Activated CD4-positive, alpha-beta memory T cell treated with anti-CD3 and anti-CD28 coated beads, Interleukin-2, amount 10 ng/mL, durations not matched to agents 7 days and 5 days (primary cell): ENCODE measurements at regions of chr2 and their contacts with region 1.

Region 1: GRCh38 chr2:54570925-54571694 is 115.0 kb downstream of the SPTBN1 start:
- DNase-seq: peak; percentile 82
- H3K4me3 Mint-ChIP-seq: peak overlapping the region; percentile 49
- H3K27ac Mint-ChIP-seq: peak overlapping the region; percentile 95
- H3K4me1 Mint-ChIP-seq: peaks cover 84% of the 10 kb centered on the region
- H3K27me3 Mint-ChIP-seq: no peaks in the 10 kb centered on the region

Region 2: GRCh38 chr2:54535599-54536195 is 35.4 kb before region 1 on chr2:
- CTCF ChIA-PET with region 1: no interaction called
- POLR2A ChIA-PET with region 1: no interaction called
- DNase-seq: no peak
- H3K4me3 Mint-ChIP-seq: no peak overlapping the region
- H3K27ac Mint-ChIP-seq: no peak overlapping the region
- H3K4me1 Mint-ChIP-seq: peaks cover under 1% of the 10 kb centered on the region
- H3K27me3 Mint-ChIP-seq: peaks cover 17% of the 10 kb centered on the region

Region 3: DNA sequence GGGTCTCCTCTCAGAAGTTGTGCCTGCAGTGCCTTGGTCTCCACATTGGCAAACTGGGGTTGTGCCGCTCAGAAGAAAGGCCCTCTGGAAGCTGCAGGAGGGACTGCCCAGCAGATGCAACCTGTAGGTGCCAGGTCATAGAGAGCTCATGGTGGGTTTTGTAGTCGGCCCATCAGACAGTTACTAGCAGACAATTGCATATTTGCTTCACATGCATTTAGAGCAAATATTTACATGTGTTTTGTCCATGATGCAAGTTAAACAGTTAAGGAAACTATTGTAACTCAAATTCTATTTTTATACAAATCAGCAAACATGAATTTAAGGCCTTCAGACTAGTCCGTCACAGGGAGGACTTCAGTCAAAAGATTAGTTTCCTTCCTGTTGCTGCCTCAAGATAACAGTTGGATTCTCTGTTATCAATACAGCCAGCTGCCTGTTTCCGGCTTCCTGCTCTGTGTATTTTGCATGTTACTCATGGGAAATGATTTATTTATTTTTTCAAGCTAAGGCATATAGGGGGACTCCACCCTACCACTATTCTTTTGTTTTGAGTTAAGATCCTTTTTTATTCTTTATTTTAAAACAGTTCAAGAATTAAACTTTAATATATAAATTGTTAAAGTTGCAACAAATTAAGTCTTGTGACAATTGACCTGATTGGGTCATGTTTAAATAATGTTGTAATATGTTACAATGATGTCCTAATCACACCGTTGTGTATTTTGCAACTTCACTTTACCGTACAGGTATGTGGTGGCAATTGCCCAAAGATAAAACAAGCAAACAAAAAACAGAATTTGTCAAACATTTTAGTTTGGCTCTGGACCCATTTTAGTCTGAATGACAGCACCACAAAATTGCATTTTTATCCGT is 18.5 kb after region 1 on chr2:
- CTCF ChIA-PET with region 1: interaction called, 3 read pairs
- POLR2A ChIA-PET with region 1: interaction called, 28 read pairs
- DNase-seq: peak; percentile 51
- H3K4me3 Mint-ChIP-seq: peak overlapping the region; percentile 36
- H3K27ac Mint-ChIP-seq: peak overlapping the region; percentile 91
- H3K4me1 Mint-ChIP-seq: peaks cover 69% of the 10 kb centered on the region
- H3K27me3 Mint-ChIP-seq: no peaks in the 10 kb centered on the region

Region 4: GRCh38 chr2:54597153-54597848 is 26.2 kb after region 1 on chr2:
- CTCF ChIA-PET with region 1: interaction called, 7 read pairs
- POLR2A ChIA-PET with region 1: interaction called, 21 read pairs
- DNase-seq: no peak
- H3K4me3 Mint-ChIP-seq: no peak overlapping the region
- H3K27ac Mint-ChIP-seq: peak overlapping the region; percentile 87
- H3K4me1 Mint-ChIP-seq: peaks cover 74% of the 10 kb centered on the region
- H3K27me3 Mint-ChIP-seq: no peaks in the 10 kb centered on the region

Region 5: DNA sequence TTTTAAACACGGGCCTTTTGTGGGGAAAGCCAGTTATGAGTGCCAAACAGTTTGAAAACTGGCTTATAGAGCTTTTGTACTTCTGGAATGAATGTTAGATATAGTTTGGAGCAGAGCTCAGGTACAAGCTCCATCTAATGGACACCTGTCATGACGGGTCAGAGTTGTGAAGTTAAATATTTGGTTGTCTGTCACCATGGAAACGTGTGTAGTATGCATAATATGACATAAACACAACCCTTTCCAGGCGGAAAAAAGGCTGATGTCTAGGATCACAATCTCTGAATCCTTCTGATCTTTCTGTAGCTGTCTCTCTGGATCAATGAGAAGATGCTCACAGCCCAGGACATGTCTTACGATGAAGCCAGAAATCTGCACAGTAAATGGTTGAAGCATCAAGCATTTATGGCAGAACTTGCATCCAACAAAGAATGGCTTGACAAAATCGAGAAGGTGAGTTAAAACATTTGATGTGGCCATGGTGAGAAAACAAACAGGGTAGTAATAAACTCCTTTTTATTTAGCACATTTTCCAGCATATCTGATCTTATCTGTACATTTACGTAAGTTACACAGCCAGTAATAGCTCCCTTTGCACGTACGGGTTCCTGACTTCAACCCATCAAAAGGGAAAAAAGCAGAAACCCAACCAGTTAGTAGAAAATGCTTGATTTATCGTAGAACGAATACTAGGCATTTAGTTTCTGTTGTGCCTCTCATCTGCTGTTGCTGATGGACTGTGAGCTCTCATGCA is 71.7 kb after region 1 on chr2:
- CTCF ChIA-PET with region 1: no interaction called
- POLR2A ChIA-PET with region 1: no interaction called
- DNase-seq: no peak
- H3K4me3 Mint-ChIP-seq: no peak overlapping the region
- H3K27ac Mint-ChIP-seq: no peak overlapping the region
- H3K4me1 Mint-ChIP-seq: peaks cover 7% of the 10 kb centered on the region
- H3K27me3 Mint-ChIP-seq: no peaks in the 10 kb centered on the region